ENCODE measurements at regions of chr9 and their contacts with region 1.

Region 1: GRCh38 chr9:37800631-37801286 is at the start of gene DCAF10:
- DNase-seq: peak; percentile 92
- H3K4me3 ChIP-seq: peak within 1 kb of the TSS; percentile 90 to 96 (median 92)
- H3K27ac ChIP-seq: peak within 1 kb of the TSS; percentile 90 to 94 (median 92)
- H3K4me1 ChIP-seq: peaks cover 5 to 36% (median 29%) of the 10 kb centered on the region in 4 donors
- H3K27me3 ChIP-seq: no peaks in the 10 kb centered on the region
- CTCF ChIP-seq: no peak
- EP300 ChIP-seq: no peak
- POLR2A ChIP-seq: peak; percentile 56 to 64
- total RNA-seq, gene DCAF10: 29.1 to 49.3 (median 40.6) TPM

Region 2: GRCh38 chr9:37784616-37785483 is 15.9 kb before region 1 on chr9 and contains the start of gene EXOSC3:
- intact Hi-C with region 1: loop called (anchors 1 kb)
- DNase-seq: peak; percentile 93
- H3K4me3 ChIP-seq: peak within 1 kb of the TSS; percentile 84 to 92 (median 86)
- H3K27ac ChIP-seq: peak within 1 kb of the TSS; percentile 85 to 89 (median 86)
- H3K4me1 ChIP-seq: peaks cover 0 to 19% (median 14%) of the 10 kb centered on the region in 4 donors
- H3K27me3 ChIP-seq: peaks cover 0 to 5% (median 4%) of the 10 kb centered on the region in 3 donors
- CTCF ChIP-seq: peak in 1 of 4 experiments; percentile 15
- EP300 ChIP-seq: no peak
- POLR2A ChIP-seq: peak; percentile 61 to 63
- total RNA-seq, gene EXOSC3: 38.7 to 44.6 (median 41.3) TPM

Region 3: DNA sequence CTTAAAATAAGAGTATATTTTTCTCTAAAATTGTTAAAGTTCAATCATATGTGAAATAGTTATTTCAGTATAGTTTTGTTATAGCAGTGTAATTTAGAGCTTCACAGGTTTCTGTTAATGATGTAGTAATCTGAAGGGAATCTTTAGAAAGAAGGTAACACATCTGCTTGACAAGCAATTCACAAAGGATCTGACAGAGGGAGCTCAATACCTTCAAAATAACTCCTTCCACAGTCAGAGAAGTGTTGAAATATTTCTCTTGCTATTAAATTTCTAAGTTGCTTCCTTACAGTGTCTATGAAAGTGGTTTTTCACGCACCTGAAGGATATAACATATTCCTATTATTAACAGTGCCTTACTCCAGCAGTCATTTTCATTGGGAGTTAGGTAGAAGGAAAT is 58.3 kb after region 1 on chr9:
- intact Hi-C with region 1: loop called (anchors 10 kb)
- DNase-seq: no peak
- H3K4me3 ChIP-seq: no peak overlapping the region
- H3K27ac ChIP-seq: no peak overlapping the region
- H3K4me1 ChIP-seq: no peaks in the 10 kb centered on the region
- H3K27me3 ChIP-seq: no peaks in the 10 kb centered on the region
- CTCF ChIP-seq: no peak
- EP300 ChIP-seq: no peak
- POLR2A ChIP-seq: no peak

Region 4: GRCh38 chr9:38074441-38074961 is 273.7 kb after region 1 on chr9:
- intact Hi-C with region 1: loop called (anchors 5 kb)
- DNase-seq: no peak
- H3K4me3 ChIP-seq: no peak overlapping the region
- H3K27ac ChIP-seq: no peak overlapping the region
- H3K4me1 ChIP-seq: peaks cover 0 to 7% (median 2%) of the 10 kb centered on the region in 4 donors
- H3K27me3 ChIP-seq: no peaks in the 10 kb centered on the region
- CTCF ChIP-seq: no peak
- EP300 ChIP-seq: no peak
- POLR2A ChIP-seq: no peak